Activated B cell treated with CpG ODN at 0.5 μM for 24 hours (primary cell): ENCODE measurements at regions of chr2 and their contacts with region 1.

Region 1: GRCh38 chr2:186862869-186863709 is 14.1 kb upstream of the ZSWIM2 start:
- DNase-seq: no peak
- ATAC-seq: no peak
- H3K4me3 Mint-ChIP-seq: no peak overlapping the region
- H3K27ac Mint-ChIP-seq: no peak overlapping the region
- H3K4me1 Mint-ChIP-seq: no peaks in the 10 kb centered on the region
- H3K27me3 Mint-ChIP-seq: no peaks in the 10 kb centered on the region
- CTCF ChIP-seq: no peak

Region 2: DNA sequence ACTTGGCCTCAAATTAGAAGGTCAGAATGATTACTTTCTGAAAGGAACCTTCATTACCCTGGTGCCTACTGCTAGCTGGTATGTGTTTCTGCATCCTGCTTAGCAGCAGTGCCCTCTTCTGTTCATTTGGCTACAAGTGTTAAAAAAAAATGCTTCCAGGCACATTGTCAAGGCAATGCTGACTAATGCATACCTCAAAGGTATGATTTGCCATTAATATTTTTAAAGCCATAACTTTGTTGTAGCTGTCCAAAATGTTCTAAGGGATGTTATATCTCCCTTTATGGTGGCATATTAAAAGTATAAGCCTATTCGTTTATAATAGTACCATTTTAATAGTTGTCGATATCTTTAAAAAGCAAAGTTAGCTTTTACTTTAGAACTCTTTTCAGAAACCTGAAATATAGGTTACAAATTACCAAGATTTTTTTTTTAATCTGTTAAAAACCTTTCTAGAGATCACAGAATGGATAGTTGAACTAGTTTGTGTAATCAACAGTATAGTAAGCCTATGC is 221.2 kb before region 1 on chr2:
- CTCF ChIA-PET with region 1: no interaction called
- POLR2A ChIA-PET with region 1: no interaction called
- intact Hi-C with region 1: no loop called
- DNase-seq: no peak
- ATAC-seq: peak; percentile 56
- H3K4me3 Mint-ChIP-seq: no peak overlapping the region
- H3K27ac Mint-ChIP-seq: no peak overlapping the region
- H3K4me1 Mint-ChIP-seq: no peaks in the 10 kb centered on the region
- H3K27me3 Mint-ChIP-seq: no peaks in the 10 kb centered on the region
- CTCF ChIP-seq: no peak

Region 3: GRCh38 chr2:187453078-187453641 is 590.1 kb after region 1 on chr2:
- CTCF ChIA-PET with region 1: no interaction called
- POLR2A ChIA-PET with region 1: no interaction called
- intact Hi-C with region 1: loop called (anchors 10 kb)
- DNase-seq: no peak
- ATAC-seq: no peak
- H3K4me3 Mint-ChIP-seq: no peak overlapping the region
- H3K27ac Mint-ChIP-seq: no peak overlapping the region
- H3K4me1 Mint-ChIP-seq: no peaks in the 10 kb centered on the region
- H3K27me3 Mint-ChIP-seq: no peaks in the 10 kb centered on the region
- CTCF ChIP-seq: no peak